B cell (primary cell): ENCODE measurements at regions of chr7 and their contacts with region 1.

Region 1: DNA sequence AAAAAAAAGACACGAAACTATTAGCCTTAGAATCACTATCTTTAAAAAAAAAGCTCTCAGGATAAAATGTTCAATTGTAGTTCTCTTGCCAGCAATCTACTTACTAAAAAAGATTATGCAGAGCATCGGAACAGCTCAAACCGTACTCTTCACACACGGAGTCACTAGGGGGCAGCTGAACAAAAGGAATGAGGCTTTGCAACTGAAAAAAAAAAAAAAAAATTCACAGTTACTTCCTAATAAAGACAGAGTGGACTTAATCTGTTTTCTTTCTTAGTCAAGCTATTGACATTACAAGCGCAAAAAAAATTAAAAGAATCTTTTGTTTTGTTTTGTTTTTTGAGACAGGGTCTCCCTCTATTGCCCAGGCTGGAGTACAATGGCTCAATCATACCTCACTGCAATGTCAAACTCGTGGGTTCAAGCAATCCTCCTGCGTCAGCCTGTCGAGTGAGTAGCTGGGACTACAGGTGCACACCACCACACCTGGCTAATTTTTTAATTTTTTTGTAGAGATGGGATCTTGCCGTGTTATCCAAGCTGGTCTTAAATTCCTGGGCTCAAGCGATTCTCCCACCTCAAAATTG is 11.5 kb downstream of the PMS2 start:
- DNase-seq: peak; percentile 74
- ATAC-seq: peak; percentile 67
- H3K4me3 ChIP-seq: no peak overlapping the region
- H3K4me3 Mint-ChIP-seq: no peak overlapping the region
- H3K27ac ChIP-seq: no peak overlapping the region
- H3K27ac Mint-ChIP-seq: no peak overlapping the region
- H3K4me1 ChIP-seq: no peaks in the 10 kb centered on the region
- H3K4me1 Mint-ChIP-seq: peaks cover 2% of the 10 kb centered on the region
- H3K27me3 ChIP-seq: no peaks in the 10 kb centered on the region
- H3K27me3 Mint-ChIP-seq: no peaks in the 10 kb centered on the region
- CTCF ChIP-seq: peak; percentile 77

Region 2: DNA sequence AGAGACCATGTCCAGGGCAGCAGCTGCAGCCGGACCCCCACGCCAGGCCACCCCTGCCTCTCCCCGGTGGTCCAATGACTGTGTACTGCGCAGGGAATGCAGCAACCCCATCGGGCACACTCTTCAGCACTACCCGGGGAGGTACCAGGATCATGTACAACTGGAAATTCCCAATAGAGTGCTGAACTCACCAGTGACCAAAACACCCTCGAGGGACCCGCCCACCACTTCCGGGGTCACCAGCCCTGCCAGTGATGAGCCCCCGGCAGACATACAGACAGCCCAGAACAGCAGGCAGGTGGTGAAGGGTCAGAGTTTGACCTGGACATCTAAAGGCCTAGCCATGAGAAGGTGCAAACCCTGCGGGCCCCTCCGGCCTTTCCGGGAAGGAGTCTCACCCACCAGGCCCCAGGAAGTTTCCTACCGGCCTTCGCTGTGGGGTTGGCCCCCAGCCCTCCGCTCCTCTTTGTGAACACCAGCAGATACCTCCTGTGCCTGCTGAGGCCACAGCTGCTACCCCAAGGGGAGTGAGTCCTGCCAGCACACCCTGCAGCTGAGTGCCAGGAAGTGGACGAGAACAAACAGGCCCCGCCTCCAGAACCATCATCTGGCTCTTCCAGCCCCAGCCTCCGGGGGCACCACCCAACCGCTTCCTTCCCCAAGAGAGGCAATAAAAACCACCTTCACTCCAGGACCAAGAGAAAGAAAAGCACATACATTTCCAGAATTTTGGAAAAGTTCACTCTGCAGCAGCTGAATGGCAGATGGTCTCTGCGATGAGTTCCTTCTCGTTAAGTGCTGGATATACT is 28.9 kb after region 1 on chr7:
- CTCF ChIA-PET with region 1: interaction called, 10 read pairs
- POLR2A ChIA-PET with region 1: no interaction called
- intact Hi-C with region 1: no loop called
- DNase-seq: peak; percentile 80
- ATAC-seq: peak; percentile 99
- H3K4me3 ChIP-seq: peak overlapping the region; percentile 37 to 47 (median 41)
- H3K4me3 Mint-ChIP-seq: peak overlapping the region; percentile 79
- H3K27ac ChIP-seq: peak overlapping the region; percentile 64 to 79
- H3K27ac Mint-ChIP-seq: peak overlapping the region; percentile 94
- H3K4me1 ChIP-seq: peaks cover 15 to 22% of the 10 kb centered on the region in 2 donors
- H3K4me1 Mint-ChIP-seq: peaks cover 22% of the 10 kb centered on the region
- H3K27me3 ChIP-seq: no peaks in the 10 kb centered on the region
- H3K27me3 Mint-ChIP-seq: no peaks in the 10 kb centered on the region
- CTCF ChIP-seq: peak; percentile 41

Region 3: GRCh38 chr7:6106140-6106904 is 109.0 kb after region 1 on chr7:
- CTCF ChIA-PET with region 1: interaction called, 4 read pairs
- POLR2A ChIA-PET with region 1: no interaction called
- intact Hi-C with region 1: loop called (anchors 1 kb)
- DNase-seq: peak; percentile 51
- ATAC-seq: no peak
- H3K4me3 ChIP-seq: peak overlapping the region; percentile 58 to 76 (median 70)
- H3K4me3 Mint-ChIP-seq: peak overlapping the region; percentile 88
- H3K27ac ChIP-seq: peak overlapping the region; percentile 60 to 71
- H3K27ac Mint-ChIP-seq: peak overlapping the region; percentile 86
- H3K4me1 ChIP-seq: peaks cover 13 to 24% of the 10 kb centered on the region in 2 donors
- H3K4me1 Mint-ChIP-seq: peaks cover 31% of the 10 kb centered on the region
- H3K27me3 ChIP-seq: no peaks in the 10 kb centered on the region
- H3K27me3 Mint-ChIP-seq: no peaks in the 10 kb centered on the region
- CTCF ChIP-seq: peak; percentile 18

Region 4: DNA sequence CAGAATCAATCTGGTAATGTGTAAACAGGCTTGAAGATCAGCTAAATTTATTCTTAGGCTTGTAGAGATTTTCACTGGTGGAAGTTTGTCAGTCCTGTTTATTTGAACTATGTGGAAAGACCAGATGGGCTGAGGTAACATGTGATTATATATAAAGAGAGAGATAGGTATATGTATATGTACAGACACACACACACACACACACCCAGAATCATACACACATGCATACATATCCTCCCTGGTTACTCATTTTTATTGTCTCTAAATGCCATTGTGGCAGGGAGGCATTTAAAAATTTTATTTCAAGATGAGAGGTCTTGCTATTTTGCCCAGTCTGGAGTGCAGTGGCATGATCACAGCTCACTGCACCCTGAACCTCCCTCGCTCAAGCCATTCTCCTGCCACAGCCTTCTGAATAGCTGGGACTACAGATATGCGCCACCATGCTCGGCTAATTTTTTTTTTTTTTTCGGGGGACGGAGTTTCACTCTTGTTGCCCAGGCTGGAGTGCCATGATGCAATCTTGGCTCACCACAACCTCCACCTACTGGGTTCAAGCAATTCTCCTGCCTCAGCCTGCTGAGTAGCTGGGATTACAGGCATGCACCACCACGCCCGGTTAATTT is 353.2 kb after region 1 on chr7:
- CTCF ChIA-PET with region 1: interaction called, 19 read pairs
- POLR2A ChIA-PET with region 1: interaction called, 6 read pairs
- intact Hi-C with region 1: no loop called
- DNase-seq: peak; percentile 25
- ATAC-seq: no peak
- H3K4me3 ChIP-seq: no peak overlapping the region
- H3K4me3 Mint-ChIP-seq: peak overlapping the region; percentile 78
- H3K27ac ChIP-seq: peak overlapping the region in 1 of 2 donors; percentile 49
- H3K27ac Mint-ChIP-seq: peak overlapping the region; percentile 84
- H3K4me1 ChIP-seq: peaks cover 17 to 35% of the 10 kb centered on the region in 2 donors
- H3K4me1 Mint-ChIP-seq: peaks cover 24% of the 10 kb centered on the region
- H3K27me3 ChIP-seq: no peaks in the 10 kb centered on the region
- H3K27me3 Mint-ChIP-seq: no peaks in the 10 kb centered on the region
- CTCF ChIP-seq: no peak